ENCODE measurements at regions of chr10 and their contacts with region 1.

Region 1: DNA sequence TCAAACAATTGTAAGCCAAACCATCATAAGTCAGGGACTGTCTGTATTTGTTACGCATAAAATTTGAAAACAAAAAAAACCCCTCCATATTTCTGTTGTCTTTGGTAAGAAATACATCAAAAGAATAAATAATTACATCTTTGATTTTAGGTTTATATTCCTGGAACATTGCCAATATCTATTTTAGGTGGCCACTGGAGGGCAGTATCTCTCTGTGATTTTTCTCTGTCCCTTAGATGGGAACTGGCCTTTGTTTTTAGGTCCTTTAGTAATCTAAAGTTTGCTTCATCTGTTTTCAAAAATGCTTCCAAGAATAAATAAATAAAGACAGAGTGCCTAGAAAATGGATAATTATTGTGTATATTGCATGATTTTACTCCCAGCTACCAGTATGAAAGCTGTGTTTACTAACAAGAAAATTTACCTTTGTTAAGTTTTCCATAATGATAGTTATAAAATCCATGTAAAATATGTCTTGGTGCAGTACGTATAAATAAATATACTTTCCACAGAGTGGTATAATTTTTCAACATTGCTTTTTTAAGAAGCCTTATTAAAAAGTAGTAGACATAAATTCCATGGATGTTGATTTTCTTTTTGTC is 64.2 kb downstream of the PHYHIPL start:
- DNase-seq: peak; percentile 23
- H3K4me3 ChIP-seq: no peak overlapping the region
- H3K27ac ChIP-seq: no peak overlapping the region
- H3K4me1 ChIP-seq: no peaks in the 10 kb centered on the region
- H3K27me3 ChIP-seq: no peaks in the 10 kb centered on the region
- CTCF ChIP-seq: peak; percentile 58

Region 2: DNA sequence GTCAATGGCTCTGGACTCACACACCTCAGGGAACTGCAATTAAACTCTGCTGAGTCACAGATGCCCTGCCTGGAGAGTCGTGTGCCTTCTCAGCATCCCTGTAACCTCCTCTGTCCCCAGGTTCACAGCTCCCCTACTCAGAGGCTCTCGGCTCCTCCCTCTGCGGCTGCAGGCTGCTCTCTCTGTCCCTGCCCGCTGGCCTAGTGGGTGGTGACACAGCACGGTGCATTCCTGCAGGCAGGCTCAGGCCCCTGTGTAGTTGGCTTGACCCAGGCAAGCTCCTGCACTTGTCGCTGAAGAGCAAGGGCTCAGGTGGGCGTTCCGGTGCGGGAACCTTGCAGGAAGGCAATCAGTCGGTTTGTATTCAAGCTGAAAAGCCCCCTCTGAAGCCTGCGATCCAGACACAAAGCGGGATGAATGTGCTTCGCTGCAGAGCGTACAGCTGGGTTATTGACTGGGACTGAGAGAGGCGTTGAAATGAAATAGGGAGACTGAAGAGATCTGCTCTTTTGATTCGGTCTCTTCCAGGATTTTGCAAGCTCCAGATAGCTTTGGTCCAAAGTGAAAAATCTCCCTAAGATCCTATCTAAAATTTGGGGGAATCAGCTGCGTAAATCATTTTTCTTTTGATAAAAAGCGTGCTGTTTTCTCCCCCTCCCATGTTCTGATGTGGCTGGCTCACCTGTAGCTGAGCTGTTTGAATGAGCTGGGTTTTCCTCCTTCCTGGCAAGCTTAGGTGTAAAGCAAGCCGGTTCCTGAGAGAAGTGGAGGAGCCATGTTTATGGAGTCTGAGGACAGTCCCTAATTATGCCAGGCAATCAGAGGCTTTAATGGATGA is 272.9 kb before region 1 on chr10:
- intact Hi-C with region 1: no loop called
- DNase-seq: no peak
- H3K4me3 ChIP-seq: no peak overlapping the region
- H3K27ac ChIP-seq: no peak overlapping the region
- H3K4me1 ChIP-seq: no peaks in the 10 kb centered on the region
- H3K27me3 ChIP-seq: no peaks in the 10 kb centered on the region
- CTCF ChIP-seq: no peak

Region 3: DNA sequence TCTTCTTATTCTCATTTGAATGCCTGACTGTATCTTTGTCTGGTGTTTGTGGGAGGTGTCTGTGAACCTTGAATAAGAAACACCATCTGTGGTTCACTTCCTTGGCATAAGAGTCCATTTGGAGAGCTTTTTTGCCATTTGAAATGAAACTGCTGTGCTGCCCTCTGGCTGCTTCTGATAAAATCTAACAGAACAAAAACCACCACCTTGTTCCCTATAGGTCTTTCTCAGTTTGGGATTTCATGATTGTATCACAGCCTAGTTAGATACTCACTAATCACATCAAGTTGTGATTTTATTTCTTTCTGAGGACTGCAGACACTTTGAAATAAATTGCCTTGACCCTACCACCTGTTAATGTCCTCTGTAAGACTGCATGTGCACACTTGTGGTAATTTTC is 224.4 kb after region 1 on chr10:
- intact Hi-C with region 1: loop called (anchors 10 kb)
- DNase-seq: no peak
- H3K4me3 ChIP-seq: no peak overlapping the region
- H3K27ac ChIP-seq: no peak overlapping the region
- H3K4me1 ChIP-seq: no peaks in the 10 kb centered on the region
- H3K27me3 ChIP-seq: no peaks in the 10 kb centered on the region
- CTCF ChIP-seq: no peak

Region 4: DNA sequence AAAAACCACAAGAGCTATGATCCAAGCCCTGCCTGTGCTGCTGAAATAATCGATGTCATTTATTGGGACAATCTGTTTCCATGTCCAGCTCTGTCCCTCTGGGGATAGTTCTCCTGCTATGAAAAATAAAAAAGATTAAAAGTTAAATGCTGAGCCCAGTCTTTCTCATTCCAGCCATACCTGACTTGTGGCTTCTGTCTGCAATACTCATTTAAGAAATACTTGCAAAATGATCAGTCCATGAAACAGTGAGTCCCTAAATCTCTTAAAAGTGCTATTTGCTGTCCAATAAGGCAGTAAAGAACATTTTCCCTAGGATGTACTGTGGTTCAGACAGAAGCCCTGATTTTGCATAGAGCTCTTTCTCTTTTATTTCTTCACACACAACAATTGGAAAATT is 377.3 kb after region 1 on chr10:
- intact Hi-C with region 1: loop called (anchors 2 kb)
- DNase-seq: no peak
- H3K4me3 ChIP-seq: no peak overlapping the region
- H3K27ac ChIP-seq: no peak overlapping the region
- H3K4me1 ChIP-seq: no peaks in the 10 kb centered on the region
- H3K27me3 ChIP-seq: no peaks in the 10 kb centered on the region
- CTCF ChIP-seq: no peak

Measured in colonic mucosa (tissue), 4 donors.